Gastrocnemius medialis (tissue), 4 donors: ENCODE measurements at regions of chr11 and their contacts with region 1.

Region 1: DNA sequence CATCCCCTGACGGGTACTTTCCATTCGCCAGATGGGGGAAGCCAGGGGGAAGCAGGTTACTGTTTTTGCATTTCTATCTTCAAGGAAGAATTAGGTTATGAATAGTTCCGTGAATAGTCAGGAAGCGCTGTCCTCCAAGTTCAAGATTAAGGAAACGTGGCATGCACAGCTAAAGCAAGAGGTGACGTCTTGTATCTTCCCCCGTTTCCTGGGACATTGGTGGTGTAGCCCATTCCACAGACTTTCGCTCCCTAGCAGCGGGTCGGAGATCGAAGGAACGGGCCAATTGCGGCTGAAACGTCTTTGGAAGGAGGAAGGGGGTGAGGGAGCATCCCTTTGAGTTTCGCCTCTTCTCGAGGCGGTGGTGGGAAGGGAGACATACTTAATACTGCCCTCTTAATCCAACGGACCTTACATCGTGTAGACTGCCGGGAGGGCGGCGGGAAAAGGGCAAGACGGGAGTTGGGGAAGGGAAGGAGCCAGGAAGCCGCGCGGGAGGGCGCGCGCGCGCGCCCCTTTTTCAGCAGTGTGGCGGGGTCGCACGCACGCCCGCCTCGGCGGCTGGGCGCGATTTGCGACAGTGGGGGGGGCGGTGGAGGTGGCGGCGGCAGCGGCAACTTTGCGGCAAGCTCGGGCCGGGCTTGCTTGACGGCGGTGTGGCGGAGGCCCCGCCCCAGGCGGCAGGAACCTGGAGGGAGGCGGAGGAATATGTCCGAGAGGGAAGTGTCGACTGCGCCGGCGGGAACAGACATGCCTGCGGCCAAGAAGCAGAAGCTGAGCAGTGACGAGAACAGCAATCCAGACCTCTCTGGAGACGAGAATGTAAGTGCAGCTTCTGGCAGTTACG is at the start of gene EED:
- DNase-seq: peak; percentile 90 to 92
- ATAC-seq: peak; percentile 92 to 94
- H3K4me3 ChIP-seq: peak within 1 kb of the TSS; percentile 88 to 94 (median 92)
- H3K27ac ChIP-seq: peak within 1 kb of the TSS; percentile 96 to 99 (median 98)
- H3K4me1 ChIP-seq: peaks cover 15 to 35% of the 10 kb centered on the region in 2 donors
- H3K27me3 ChIP-seq: no peaks in the 10 kb centered on the region
- CTCF ChIP-seq: no peak
- POLR2A ChIP-seq: peak; percentile 46 to 70
- total RNA-seq, gene EED: 5.2 to 12.1 (median 8.5) TPM

Region 2: GRCh38 chr11:85619497-85619896 is 625.2 kb before region 1 on chr11:
- in situ Hi-C with region 1: loop called in 1 of 4 experiments (anchors 25 kb)
- intact Hi-C with region 1: no loop called
- DNase-seq: peak in 1 of 2 donors; percentile 39
- ATAC-seq: peak in 1 of 2 donors; percentile 30
- H3K4me3 ChIP-seq: no peak overlapping the region
- H3K27ac ChIP-seq: no peak overlapping the region
- H3K4me1 ChIP-seq: peaks cover 10 to 12% of the 10 kb centered on the region in 2 donors
- H3K27me3 ChIP-seq: no peaks in the 10 kb centered on the region
- CTCF ChIP-seq: no peak
- POLR2A ChIP-seq: no peak

Region 3: GRCh38 chr11:85664615-85665481 is 579.9 kb before region 1 on chr11 and contains the start of gene CREBZF:
- in situ Hi-C with region 1: no loop called
- intact Hi-C with region 1: loop called (anchors 5 kb)
- DNase-seq: peak; percentile 88 to 91
- ATAC-seq: peak; percentile 94
- H3K4me3 ChIP-seq: peak within 1 kb of the TSS; percentile 91 to 98 (median 97)
- H3K27ac ChIP-seq: peak within 1 kb of the TSS; percentile 93 to 99 (median 98)
- H3K4me1 ChIP-seq: peaks cover 35 to 42% of the 10 kb centered on the region in 2 donors
- H3K27me3 ChIP-seq: no peaks in the 10 kb centered on the region
- CTCF ChIP-seq: peak in 1 of 5 experiments; percentile 15
- POLR2A ChIP-seq: peak; percentile 96 to 98
- total RNA-seq, gene CREBZF: 15.3 to 52.3 (median 16.4) TPM

Region 4: GRCh38 chr11:86068951-86069407 is 175.8 kb before region 1 on chr11 and contains the start of gene PICALM:
- in situ Hi-C with region 1: no loop called
- intact Hi-C with region 1: loop called (anchors 5 kb)
- DNase-seq: peak; percentile 98
- ATAC-seq: peak; percentile 79 to 81
- H3K4me3 ChIP-seq: peak within 1 kb of the TSS; percentile 80 to 100 (median 90)
- H3K27ac ChIP-seq: peak within 1 kb of the TSS; percentile 97 to 100 (median 98)
- H3K4me1 ChIP-seq: peaks cover 32 to 35% of the 10 kb centered on the region in 2 donors
- H3K27me3 ChIP-seq: no peaks in the 10 kb centered on the region
- CTCF ChIP-seq: peak in 2 of 5 experiments; percentile 54 to 67
- POLR2A ChIP-seq: peak; percentile 81 to 90
- total RNA-seq, gene PICALM: 82.3 to 125 (median 107) TPM

Region 5: DNA sequence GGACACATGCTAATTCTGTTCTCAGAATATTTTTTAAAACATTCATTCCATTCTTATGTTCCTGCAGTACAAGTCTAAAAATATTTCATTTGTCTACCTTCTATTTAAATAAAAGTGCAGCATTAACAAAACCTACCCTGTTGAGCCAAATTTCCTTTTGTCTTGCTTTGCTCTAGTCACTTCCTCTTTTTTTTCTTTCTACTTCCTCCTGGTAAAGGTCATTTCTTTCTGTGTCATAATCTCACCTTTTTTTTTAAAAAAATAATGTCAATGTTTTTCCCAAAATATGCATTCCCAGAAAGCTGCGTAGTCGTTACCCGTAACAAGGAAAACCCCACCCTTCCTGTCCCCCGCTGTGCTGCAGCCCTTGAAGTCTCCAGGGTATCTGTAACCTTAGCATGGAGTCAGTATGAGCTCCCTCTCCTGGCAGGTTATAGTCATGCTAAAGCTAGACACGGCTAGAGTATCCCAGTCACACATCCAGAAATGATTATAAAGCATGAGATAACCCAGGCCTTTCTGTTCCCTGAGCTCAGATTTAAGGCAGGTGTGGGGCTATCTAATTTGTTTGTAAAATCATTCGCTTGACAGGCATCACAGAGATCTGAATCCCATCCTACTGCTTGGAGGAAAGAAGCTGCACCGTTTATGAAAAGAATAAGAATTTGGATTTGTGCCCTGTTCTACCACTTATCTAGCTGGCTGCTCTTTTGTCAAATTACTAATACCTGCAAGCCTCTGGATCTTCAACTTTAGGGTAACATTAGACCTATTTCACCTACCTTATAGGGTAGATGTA is 51.2 kb before region 1 on chr11:
- in situ Hi-C with region 1: no loop called
- intact Hi-C with region 1: no loop called
- DNase-seq: peak; percentile 50 to 57
- ATAC-seq: peak; percentile 99 to 100
- H3K4me3 ChIP-seq: peak overlapping the region; percentile 22 to 33 (median 33)
- H3K27ac ChIP-seq: peak overlapping the region; percentile 43 to 56 (median 52)
- H3K4me1 ChIP-seq: peaks cover 8 to 12% of the 10 kb centered on the region in 2 donors
- H3K27me3 ChIP-seq: no peaks in the 10 kb centered on the region
- CTCF ChIP-seq: peak; percentile 69 to 82 (median 79)
- POLR2A ChIP-seq: no peak

Region 6: DNA sequence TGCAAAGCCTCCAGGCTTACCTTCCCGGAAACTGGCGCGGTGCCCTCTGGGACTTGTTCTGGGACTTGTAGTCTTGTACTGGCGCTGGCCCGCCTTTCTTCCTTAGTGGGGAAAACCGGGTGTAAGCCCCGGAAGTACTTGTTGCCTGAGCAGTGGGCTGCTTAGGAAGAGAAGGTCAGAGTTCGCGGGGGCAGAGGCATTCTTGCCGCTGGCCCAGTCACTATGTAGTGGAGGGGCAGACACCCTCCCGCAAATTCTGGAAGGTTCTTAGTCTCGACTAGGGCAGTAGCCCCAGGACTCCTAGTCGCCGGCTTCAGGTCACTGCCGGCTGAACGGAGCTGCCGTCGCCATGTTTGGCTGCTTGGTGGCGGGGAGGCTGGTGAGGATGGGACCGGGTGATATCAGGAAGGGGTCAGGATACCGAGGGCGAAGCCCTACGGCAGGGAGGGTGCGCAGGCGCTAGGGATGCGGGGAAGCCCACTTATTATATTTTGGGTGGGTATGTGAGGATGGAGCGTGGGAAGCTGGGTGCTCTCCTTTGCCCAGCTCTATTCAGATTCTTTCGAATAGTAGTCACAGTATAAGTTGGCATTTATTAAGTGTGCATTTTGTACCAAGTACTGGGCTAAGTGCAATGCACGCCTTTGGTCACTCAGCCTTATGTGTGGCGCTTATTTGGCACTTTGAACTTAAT is 57.5 kb after region 1 on chr11 and contains the start of gene HIKESHI:
- in situ Hi-C with region 1: no loop called
- intact Hi-C with region 1: loop called (anchors 1 kb)
- DNase-seq: peak; percentile 99
- ATAC-seq: peak; percentile 99 to 100
- H3K4me3 ChIP-seq: peak within 1 kb of the TSS; percentile 65 to 100 (median 78)
- H3K27ac ChIP-seq: peak within 1 kb of the TSS; percentile 83 to 94 (median 86)
- H3K4me1 ChIP-seq: peaks cover 14 to 28% of the 10 kb centered on the region in 2 donors
- H3K27me3 ChIP-seq: no peaks in the 10 kb centered on the region
- CTCF ChIP-seq: peak in 1 of 5 experiments; percentile 6
- POLR2A ChIP-seq: peak; percentile 43 to 52
- total RNA-seq, gene HIKESHI: 30.1 to 60.9 (median 51.8) TPM

Region 7: DNA sequence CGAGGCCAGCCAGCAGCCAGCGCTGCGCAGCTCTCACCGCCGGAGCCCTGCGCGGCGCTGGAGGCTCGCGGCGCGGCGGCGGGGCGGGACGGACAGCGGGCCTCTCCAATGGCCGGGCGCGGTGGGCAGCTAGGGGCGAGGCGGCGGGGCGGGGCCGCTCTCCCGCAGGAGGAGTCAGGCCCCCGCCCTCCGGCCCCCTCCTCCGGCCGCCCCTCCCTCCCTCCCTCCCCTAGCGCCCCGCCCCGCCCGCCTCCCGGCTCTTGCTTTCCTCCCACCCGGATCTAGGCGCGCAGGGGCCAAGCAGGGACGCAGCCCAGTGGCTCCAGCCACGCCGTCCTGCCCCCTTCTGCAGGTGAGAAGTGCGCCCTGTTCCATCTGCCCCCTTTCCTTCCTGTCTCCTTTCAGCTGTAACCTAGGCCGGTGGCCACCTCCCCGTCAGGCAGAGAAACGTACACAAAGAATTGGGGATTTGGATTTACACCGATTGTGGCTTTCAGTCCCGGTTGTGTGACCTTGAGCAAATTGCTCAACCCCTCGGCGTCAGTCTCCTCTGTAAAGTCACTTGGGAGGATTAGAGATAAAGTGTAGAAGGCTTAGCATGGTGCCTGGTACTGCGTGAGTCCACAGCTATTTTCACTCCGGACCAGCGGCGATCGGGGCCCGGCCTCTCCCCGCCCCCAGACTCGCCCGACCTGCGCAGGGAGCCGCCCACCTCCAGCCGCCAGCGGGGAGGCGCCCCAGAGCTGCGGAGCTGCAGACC is 710.8 kb after region 1 on chr11 and contains the start of gene FZD4:
- in situ Hi-C with region 1: no loop called
- intact Hi-C with region 1: loop called (anchors 10 kb)
- DNase-seq: peak; percentile 85 to 90
- ATAC-seq: peak; percentile 67 to 74
- H3K4me3 ChIP-seq: peak within 1 kb of the TSS; percentile 76 to 99 (median 88)
- H3K27ac ChIP-seq: peak within 1 kb of the TSS; percentile 93 to 100 (median 98)
- H3K4me1 ChIP-seq: peaks cover 37 to 49% of the 10 kb centered on the region in 2 donors
- H3K27me3 ChIP-seq: no peaks in the 10 kb centered on the region
- CTCF ChIP-seq: peak; percentile 22 to 63 (median 58)
- POLR2A ChIP-seq: peak in 1 of 2 donors; percentile 51
- total RNA-seq, gene FZD4: 31.7 to 52.2 (median 39.1) TPM